Activated CD4-positive, alpha-beta T cell treated with anti-CD3 and anti-CD28 coated beads for 36 hours (primary cell): ENCODE measurements at regions of chrX and their contacts with region 1.

Region 1: GRCh38 chrX:78945186-78945912 is at the start of gene P2RY10:
- DNase-seq: peak; percentile 35
- ATAC-seq: peak; percentile 79
- H3K4me3 Mint-ChIP-seq: peak within 1 kb of the TSS; percentile 90
- H3K27ac Mint-ChIP-seq: peak within 1 kb of the TSS; percentile 96
- H3K4me1 Mint-ChIP-seq: peaks cover 57% of the 10 kb centered on the region
- H3K27me3 Mint-ChIP-seq: no peaks in the 10 kb centered on the region
- total RNA-seq, gene P2RY10: 30.4 to 65.7 TPM

Region 2: GRCh38 chrX:78327370-78328086 is 617.8 kb before region 1 on chrX and contains the start of gene CYSLTR1:
- CTCF ChIA-PET with region 1: no interaction called
- POLR2A ChIA-PET with region 1: no interaction called
- intact Hi-C with region 1: loop called in 1 of 2 experiments (anchors 5 kb)
- DNase-seq: no peak
- ATAC-seq: no peak
- H3K4me3 Mint-ChIP-seq: peak within 1 kb of the TSS; percentile 74
- H3K27ac Mint-ChIP-seq: peak within 1 kb of the TSS; percentile 74
- H3K4me1 Mint-ChIP-seq: peaks cover 64% of the 10 kb centered on the region
- H3K27me3 Mint-ChIP-seq: no peaks in the 10 kb centered on the region
- total RNA-seq, gene CYSLTR1: 3.1 TPM

Region 3: GRCh38 chrX:78979789-78980464 is 34.6 kb after region 1 on chrX:
- CTCF ChIA-PET with region 1: interaction called, 3 read pairs
- POLR2A ChIA-PET with region 1: no interaction called
- intact Hi-C with region 1: loop called (anchors 2 kb)
- DNase-seq: peak; percentile 30
- ATAC-seq: peak; percentile 93
- H3K4me3 Mint-ChIP-seq: peak overlapping the region; percentile 60
- H3K27ac Mint-ChIP-seq: peak overlapping the region; percentile 94
- H3K4me1 Mint-ChIP-seq: peaks cover 20% of the 10 kb centered on the region
- H3K27me3 Mint-ChIP-seq: no peaks in the 10 kb centered on the region

Region 4: GRCh38 chrX:79146640-79147390 is 201.5 kb after region 1 on chrX:
- CTCF ChIA-PET with region 1: no interaction called
- POLR2A ChIA-PET with region 1: no interaction called
- intact Hi-C with region 1: loop called in 1 of 2 experiments (anchors 5 kb)
- DNase-seq: no peak
- ATAC-seq: peak; percentile 52
- H3K4me3 Mint-ChIP-seq: peak overlapping the region; percentile 88
- H3K27ac Mint-ChIP-seq: peak overlapping the region; percentile 97
- H3K4me1 Mint-ChIP-seq: peaks cover 33% of the 10 kb centered on the region
- H3K27me3 Mint-ChIP-seq: no peaks in the 10 kb centered on the region

Region 5: GRCh38 chrX:79161655-79162054 is 216.3 kb after region 1 on chrX:
- CTCF ChIA-PET with region 1: no interaction called
- POLR2A ChIA-PET with region 1: no interaction called
- intact Hi-C with region 1: loop called in 1 of 2 experiments (anchors 5 kb)
- DNase-seq: peak; percentile 50
- ATAC-seq: peak; percentile 77
- H3K4me3 Mint-ChIP-seq: peak overlapping the region; percentile 75
- H3K27ac Mint-ChIP-seq: peak overlapping the region; percentile 93
- H3K4me1 Mint-ChIP-seq: peaks cover 62% of the 10 kb centered on the region
- H3K27me3 Mint-ChIP-seq: no peaks in the 10 kb centered on the region

Region 6: DNA sequence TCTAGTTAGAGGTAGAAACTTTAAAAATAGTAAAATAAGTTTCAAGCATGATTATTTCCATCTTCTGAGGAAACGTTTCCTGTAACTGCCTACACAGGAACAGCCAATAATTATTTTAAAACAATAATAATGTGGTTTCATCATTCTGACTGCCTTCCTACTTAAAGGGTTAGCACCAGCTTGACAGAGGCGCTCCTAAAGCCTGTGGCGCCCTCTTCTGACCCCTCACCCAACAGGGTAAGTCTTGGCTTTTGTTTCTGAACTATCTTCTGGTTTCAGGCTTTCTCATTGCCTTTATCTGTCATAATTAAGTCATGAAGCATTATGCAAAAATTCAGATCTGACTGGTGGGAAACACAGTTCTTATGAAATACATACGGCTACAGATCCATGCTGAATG is 325.1 kb after region 1 on chrX:
- CTCF ChIA-PET with region 1: interaction called, 3 read pairs
- POLR2A ChIA-PET with region 1: no interaction called
- intact Hi-C with region 1: loop called (anchors 2 kb)
- DNase-seq: peak; percentile 87
- ATAC-seq: peak; percentile 99
- H3K4me3 Mint-ChIP-seq: no peak overlapping the region
- H3K27ac Mint-ChIP-seq: peak overlapping the region; percentile 47
- H3K4me1 Mint-ChIP-seq: peaks cover 44% of the 10 kb centered on the region
- H3K27me3 Mint-ChIP-seq: no peaks in the 10 kb centered on the region

Region 7: GRCh38 chrX:80808160-80808735 is 1862.9 kb after region 1 on chrX:
- CTCF ChIA-PET with region 1: no interaction called
- POLR2A ChIA-PET with region 1: no interaction called
- intact Hi-C with region 1: loop called in 1 of 2 experiments (anchors 10 kb)
- DNase-seq: peak; percentile 81
- ATAC-seq: peak; percentile 66
- H3K4me3 Mint-ChIP-seq: peak overlapping the region; percentile 88
- H3K27ac Mint-ChIP-seq: peak overlapping the region; percentile 93
- H3K4me1 Mint-ChIP-seq: peaks cover 25% of the 10 kb centered on the region
- H3K27me3 Mint-ChIP-seq: no peaks in the 10 kb centered on the region